CD4-positive, alpha-beta T cell (primary cell): ENCODE measurements at regions of chr1 and their contacts with region 1.

Region 1: DNA sequence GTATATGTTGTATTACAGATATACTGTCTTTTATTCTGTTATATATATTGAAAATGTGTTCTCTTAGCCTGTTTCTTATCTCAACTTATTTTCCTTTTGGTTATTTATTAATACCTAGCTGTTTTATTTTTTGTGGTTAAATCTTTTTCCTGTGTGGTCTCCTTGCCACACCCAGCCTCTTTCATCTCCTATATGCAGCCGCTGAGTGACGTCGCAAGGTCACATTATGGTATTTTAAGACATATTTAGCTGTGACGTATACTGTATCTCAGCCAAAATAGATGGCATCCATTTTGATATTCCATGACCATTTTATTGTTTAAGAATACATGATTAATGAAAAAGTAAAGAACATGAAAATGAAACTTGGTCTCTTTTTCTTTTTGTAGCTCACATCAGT is 29.1 kb downstream of the CENPF start:
- DNase-seq: peak in 10 of 14 experiments; percentile 18 to 84 (median 46)
- ATAC-seq: peak; percentile 82
- H3K4me3 ChIP-seq: no peak overlapping the region
- H3K4me3 Mint-ChIP-seq: peak overlapping the region; percentile 80
- H3K27ac ChIP-seq: no peak overlapping the region
- H3K27ac Mint-ChIP-seq: peak overlapping the region; percentile 87
- H3K4me1 ChIP-seq: peaks cover 8% of the 10 kb centered on the region
- H3K4me1 Mint-ChIP-seq: peaks cover 46% of the 10 kb centered on the region
- H3K27me3 ChIP-seq: no peaks in the 10 kb centered on the region
- H3K27me3 Mint-ChIP-seq: no peaks in the 10 kb centered on the region
- CTCF ChIP-seq: no peak

Region 2: GRCh38 chr1:214602764-214603657 is 29.1 kb before region 1 on chr1 and contains the start of gene CENPF:
- CTCF ChIA-PET with region 1: no interaction called
- POLR2A ChIA-PET with region 1: no interaction called
- intact Hi-C with region 1: loop called in 1 of 2 experiments (anchors 1 kb)
- DNase-seq: peak; percentile 84 to 98 (median 90)
- ATAC-seq: peak; percentile 98
- H3K4me3 ChIP-seq: peak within 1 kb of the TSS; percentile 67
- H3K4me3 Mint-ChIP-seq: peak within 1 kb of the TSS; percentile 93
- H3K27ac ChIP-seq: no peak within 1 kb of the TSS
- H3K27ac Mint-ChIP-seq: peak within 1 kb of the TSS; percentile 45
- H3K4me1 ChIP-seq: peaks cover 12% of the 10 kb centered on the region
- H3K4me1 Mint-ChIP-seq: peaks cover 23% of the 10 kb centered on the region
- H3K27me3 ChIP-seq: no peaks in the 10 kb centered on the region
- H3K27me3 Mint-ChIP-seq: no peaks in the 10 kb centered on the region
- CTCF ChIP-seq: peak; percentile 39
- total RNA-seq, gene CENPF: 3.4 to 3.8 TPM

Region 3: DNA sequence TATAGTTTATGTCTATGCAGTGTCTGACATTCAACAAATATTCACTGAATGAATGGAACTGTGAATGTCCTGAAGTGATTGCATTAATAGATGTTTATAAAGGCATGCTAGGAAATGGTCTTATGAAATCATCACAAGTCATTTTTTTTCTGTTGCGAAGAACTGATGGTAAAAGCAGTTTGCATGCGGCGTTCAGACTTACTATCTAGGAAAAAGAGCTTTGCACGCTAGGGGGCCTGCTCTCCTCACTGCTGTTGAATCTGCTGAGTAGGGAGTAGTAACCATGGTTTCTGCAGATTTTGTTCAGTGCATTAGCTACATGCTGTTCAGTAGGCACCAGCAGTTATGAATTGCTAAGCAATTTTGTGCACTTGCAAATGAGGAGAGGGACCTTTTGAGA is 28.8 kb after region 1 on chr1:
- CTCF ChIA-PET with region 1: no interaction called
- POLR2A ChIA-PET with region 1: no interaction called
- intact Hi-C with region 1: no loop called
- DNase-seq: peak in 6 of 14 experiments; percentile 8 to 40 (median 26)
- ATAC-seq: peak; percentile 71
- H3K4me3 ChIP-seq: no peak overlapping the region
- H3K4me3 Mint-ChIP-seq: no peak overlapping the region
- H3K27ac ChIP-seq: no peak overlapping the region
- H3K27ac Mint-ChIP-seq: no peak overlapping the region
- H3K4me1 ChIP-seq: no peaks in the 10 kb centered on the region
- H3K4me1 Mint-ChIP-seq: no peaks in the 10 kb centered on the region
- H3K27me3 ChIP-seq: no peaks in the 10 kb centered on the region
- H3K27me3 Mint-ChIP-seq: no peaks in the 10 kb centered on the region
- CTCF ChIP-seq: peak; percentile 39

Region 4: GRCh38 chr1:215076318-215076717 is 444.2 kb after region 1 on chr1:
- CTCF ChIA-PET with region 1: no interaction called
- POLR2A ChIA-PET with region 1: no interaction called
- intact Hi-C with region 1: loop called (anchors 5 to 10 kb)
- DNase-seq: peak in 1 of 14 experiments; percentile 4
- ATAC-seq: no peak
- H3K4me3 ChIP-seq: no peak overlapping the region
- H3K4me3 Mint-ChIP-seq: no peak overlapping the region
- H3K27ac ChIP-seq: no peak overlapping the region
- H3K27ac Mint-ChIP-seq: no peak overlapping the region
- H3K4me1 ChIP-seq: no peaks in the 10 kb centered on the region
- H3K4me1 Mint-ChIP-seq: no peaks in the 10 kb centered on the region
- H3K27me3 ChIP-seq: peaks cover 4 to 15% of the 10 kb centered on the region in 2 experiments
- H3K27me3 Mint-ChIP-seq: peaks cover 32% of the 10 kb centered on the region
- CTCF ChIP-seq: no peak

Region 5: DNA sequence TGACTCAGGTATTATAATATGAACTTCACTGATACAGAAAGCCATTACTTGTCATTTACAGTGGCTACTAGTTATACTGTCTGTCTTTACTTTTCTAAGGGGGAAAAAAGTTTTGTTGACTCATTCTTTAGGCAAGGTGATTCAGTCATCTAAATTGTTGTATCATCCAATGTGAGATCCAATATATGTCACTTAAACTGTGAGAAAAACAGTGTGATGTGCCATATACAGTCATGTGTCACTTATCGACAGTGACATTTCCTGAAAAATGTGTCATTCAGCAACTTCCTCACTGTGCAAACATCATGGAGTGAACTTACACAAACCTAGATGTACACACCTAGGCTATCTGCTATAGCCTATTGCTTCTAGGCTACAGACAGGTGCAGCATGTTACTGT is 508.0 kb after region 1 on chr1:
- CTCF ChIA-PET with region 1: no interaction called
- POLR2A ChIA-PET with region 1: no interaction called
- intact Hi-C with region 1: loop called in 1 of 2 experiments (anchors 5 kb)
- DNase-seq: peak in 1 of 14 experiments; percentile 1
- ATAC-seq: no peak
- H3K4me3 ChIP-seq: no peak overlapping the region
- H3K4me3 Mint-ChIP-seq: no peak overlapping the region
- H3K27ac ChIP-seq: no peak overlapping the region
- H3K27ac Mint-ChIP-seq: no peak overlapping the region
- H3K4me1 ChIP-seq: no peaks in the 10 kb centered on the region
- H3K4me1 Mint-ChIP-seq: no peaks in the 10 kb centered on the region
- H3K27me3 ChIP-seq: no peaks in the 10 kb centered on the region
- H3K27me3 Mint-ChIP-seq: peaks cover 7% of the 10 kb centered on the region
- CTCF ChIP-seq: no peak

Region 6: GRCh38 chr1:215526553-215527151 is 894.6 kb after region 1 on chr1:
- CTCF ChIA-PET with region 1: interaction called, 5 read pairs
- POLR2A ChIA-PET with region 1: no interaction called
- intact Hi-C with region 1: loop called (anchors 1 to 2 kb)
- DNase-seq: peak in 3 of 14 experiments; percentile 44 to 66 (median 63)
- ATAC-seq: peak; percentile 41
- H3K4me3 ChIP-seq: no peak overlapping the region
- H3K4me3 Mint-ChIP-seq: no peak overlapping the region
- H3K27ac ChIP-seq: no peak overlapping the region
- H3K27ac Mint-ChIP-seq: no peak overlapping the region
- H3K4me1 ChIP-seq: no peaks in the 10 kb centered on the region
- H3K4me1 Mint-ChIP-seq: peaks cover 5% of the 10 kb centered on the region
- H3K27me3 ChIP-seq: peaks cover 0 to 7% of the 10 kb centered on the region in 2 experiments
- H3K27me3 Mint-ChIP-seq: peaks cover 29% of the 10 kb centered on the region
- CTCF ChIP-seq: peak; percentile 74

Region 7: DNA sequence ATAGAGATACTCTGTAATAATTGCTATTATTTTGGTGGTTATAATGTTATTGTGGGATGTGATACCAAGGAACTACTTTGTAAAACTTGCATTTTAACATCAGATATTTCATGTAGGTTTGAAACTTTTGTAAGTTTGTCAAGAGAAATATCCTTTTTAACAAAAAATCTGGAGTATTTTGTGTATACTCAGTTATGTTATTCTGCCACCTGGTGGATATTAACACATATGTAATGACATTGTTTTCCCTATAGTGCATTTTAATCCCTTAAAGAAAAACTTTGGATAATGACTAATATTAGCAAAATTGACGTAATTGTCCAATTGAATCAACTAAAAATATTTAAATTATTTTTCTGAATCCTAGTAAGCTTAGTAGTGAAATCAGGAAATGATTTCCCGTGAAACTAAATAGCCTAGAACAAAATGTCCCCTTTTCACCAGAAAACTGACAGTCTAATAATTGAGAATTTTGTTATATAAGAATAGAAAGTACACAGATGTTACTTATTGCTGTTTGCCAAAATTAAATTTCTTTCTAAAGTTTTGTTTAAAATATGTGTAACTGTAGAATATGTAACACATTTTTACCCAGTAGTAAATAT is 974.6 kb after region 1 on chr1:
- CTCF ChIA-PET with region 1: no interaction called
- POLR2A ChIA-PET with region 1: no interaction called
- intact Hi-C with region 1: loop called in 1 of 2 experiments (anchors 5 kb)
- DNase-seq: no peak
- ATAC-seq: no peak
- H3K4me3 ChIP-seq: no peak overlapping the region
- H3K4me3 Mint-ChIP-seq: no peak overlapping the region
- H3K27ac ChIP-seq: no peak overlapping the region
- H3K27ac Mint-ChIP-seq: no peak overlapping the region
- H3K4me1 ChIP-seq: no peaks in the 10 kb centered on the region
- H3K4me1 Mint-ChIP-seq: no peaks in the 10 kb centered on the region
- H3K27me3 ChIP-seq: no peaks in the 10 kb centered on the region
- H3K27me3 Mint-ChIP-seq: no peaks in the 10 kb centered on the region
- CTCF ChIP-seq: peak; percentile 42